Dorsolateral prefrontal cortex (tissue), 120 donors: ENCODE measurements at regions of chr4 and their contacts with region 1.

Region 1: DNA sequence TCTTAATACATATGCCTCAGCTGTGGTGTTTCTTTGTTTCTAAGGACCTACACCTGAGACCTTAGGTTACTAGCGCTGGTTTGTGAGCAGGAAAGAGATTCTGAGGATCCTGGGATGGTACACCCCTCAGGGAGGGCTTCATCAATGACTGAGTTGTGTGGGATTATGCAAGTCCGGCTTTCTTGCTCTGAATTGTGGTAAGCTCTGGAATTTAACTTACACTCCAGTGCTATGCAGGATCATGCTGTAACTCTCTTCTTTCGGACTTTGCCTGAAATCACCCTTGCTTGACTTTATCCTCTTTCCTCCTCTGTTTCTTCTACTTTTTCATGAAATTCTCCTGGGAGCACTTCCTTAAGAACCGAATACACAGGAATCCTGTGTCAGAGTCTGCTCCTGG is 431.5 kb upstream of the BOD1L1 start:
- DNase-seq: no peak
- H3K4me3 ChIP-seq: no peak overlapping the region
- H3K27ac ChIP-seq: no peak overlapping the region
- H3K27me3 ChIP-seq: no peaks in the 10 kb centered on the region
- CTCF ChIP-seq: no peak

Region 2: DNA sequence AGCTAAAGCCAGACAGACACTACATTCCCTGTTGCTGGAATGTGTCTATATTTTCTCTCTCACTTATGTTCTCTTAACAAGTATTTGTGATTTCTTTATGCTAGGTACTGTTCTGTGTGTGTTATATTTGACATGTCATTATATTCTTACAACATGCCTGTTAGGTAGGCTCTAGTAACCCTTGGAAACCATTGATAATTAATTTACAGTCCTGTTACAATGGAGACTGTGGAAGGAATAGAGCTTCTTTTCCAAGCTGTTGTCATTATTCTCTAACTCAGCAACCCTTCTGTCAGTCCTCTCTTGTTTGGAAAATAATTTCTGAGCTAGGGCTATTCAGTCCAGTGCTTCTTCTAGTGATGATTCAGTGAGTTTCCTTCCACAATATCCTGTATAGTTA is 12.4 kb before region 1 on chr4:
- intact Hi-C with region 1: loop called in 1 of 2 experiments (anchors 1 kb)
- DNase-seq: no peak
- H3K4me3 ChIP-seq: no peak overlapping the region
- H3K27ac ChIP-seq: no peak overlapping the region
- H3K27me3 ChIP-seq: no peaks in the 10 kb centered on the region
- CTCF ChIP-seq: no peak

Region 3: GRCh38 chr4:14087459-14087858 is 28.5 kb after region 1 on chr4:
- intact Hi-C with region 1: no loop called
- DNase-seq: no peak
- H3K4me3 ChIP-seq: no peak overlapping the region
- H3K27ac ChIP-seq: no peak overlapping the region
- H3K27me3 ChIP-seq: no peaks in the 10 kb centered on the region
- CTCF ChIP-seq: no peak